ENCODE measurements at regions of chr6 and their contacts with region 1.

Region 1: GRCh38 chr6:34055223-34055933 is 90.5 kb downstream of the GRM4 start:
- DNase-seq: no peak
- H3K4me3 ChIP-seq: no peak overlapping the region
- H3K27ac ChIP-seq: no peak overlapping the region
- H3K4me1 ChIP-seq: peaks cover 0 to 11% (median 4%) of the 10 kb centered on the region in 4 donors
- H3K27me3 ChIP-seq: peaks cover 0 to 53% (median 0%) of the 10 kb centered on the region in 4 donors
- CTCF ChIP-seq: peak; percentile 42 to 72 (median 54)
- EP300 ChIP-seq: no peak
- POLR2A ChIP-seq: no peak

Region 2: DNA sequence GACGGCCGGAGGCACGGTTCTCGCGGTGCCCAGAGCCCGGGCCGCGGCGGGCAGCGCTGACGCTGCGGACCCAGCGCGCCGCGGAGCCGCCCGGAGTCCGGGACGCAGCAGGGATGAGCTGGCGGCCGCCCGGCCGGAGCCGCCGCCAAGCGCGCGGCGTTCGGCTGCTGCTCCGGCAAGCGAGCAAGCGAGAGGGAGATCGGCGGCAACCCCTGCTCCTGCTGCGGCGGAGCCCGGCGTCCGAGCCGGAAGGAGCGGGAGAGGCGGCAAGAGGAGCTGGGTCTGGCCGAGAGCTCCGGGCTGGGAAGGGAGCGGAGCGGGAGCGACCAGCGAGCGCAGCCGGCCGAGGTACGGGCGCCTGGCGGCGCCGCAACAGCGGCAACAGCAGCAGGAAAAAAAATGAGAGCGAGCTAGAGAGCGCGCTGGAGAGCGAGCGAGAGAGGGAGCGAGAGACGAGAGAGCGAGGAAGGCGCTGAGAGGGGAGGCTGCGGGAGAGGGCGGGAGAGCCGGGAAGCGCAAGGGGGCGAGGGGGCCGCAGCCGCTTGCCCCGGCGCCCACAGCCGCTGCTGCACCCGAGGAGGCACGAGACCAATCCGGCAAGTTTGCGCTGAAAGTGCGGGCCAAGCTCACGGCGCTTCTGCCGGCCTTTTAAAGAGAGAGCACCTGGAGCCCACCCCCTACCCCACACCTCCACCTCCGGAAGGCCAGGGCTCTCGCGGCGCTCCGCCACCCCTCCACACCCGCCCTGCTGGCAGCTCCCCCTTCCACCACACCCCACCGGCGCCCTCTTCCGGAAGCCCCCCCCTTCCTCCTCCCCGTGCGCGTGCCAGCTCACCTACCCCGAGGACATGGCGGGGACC is 90.0 kb after region 1 on chr6:
- intact Hi-C with region 1: loop called (anchors 10 kb)
- DNase-seq: no peak
- H3K4me3 ChIP-seq: peak overlapping the region; percentile 46 to 58 (median 51)
- H3K27ac ChIP-seq: no peak overlapping the region
- H3K4me1 ChIP-seq: peaks cover 24 to 44% (median 36%) of the 10 kb centered on the region in 4 donors
- H3K27me3 ChIP-seq: peaks cover 0 to 98% (median 57%) of the 10 kb centered on the region in 4 donors
- CTCF ChIP-seq: no peak
- EP300 ChIP-seq: no peak
- POLR2A ChIP-seq: no peak